T-cell (primary cell): ENCODE measurements at regions of chr7 and their contacts with region 1.

Region 1: GRCh38 chr7:6536262-6537260 is 14.7 kb downstream of the GRID2IP start:
- DNase-seq: peak in 1 of 35 experiments; percentile 11
- ATAC-seq: peak; percentile 34 to 68 (median 38)
- H3K4me3 ChIP-seq: no peak overlapping the region
- H3K4me3 Mint-ChIP-seq: no peak overlapping the region
- H3K27ac ChIP-seq: no peak overlapping the region
- H3K27ac Mint-ChIP-seq: no peak overlapping the region
- H3K4me1 ChIP-seq: peaks cover 0 to 7% of the 10 kb centered on the region in 2 experiments
- H3K4me1 Mint-ChIP-seq: peaks cover 2 to 6% (median 4%) of the 10 kb centered on the region in 3 donors
- H3K27me3 ChIP-seq: peaks cover 0 to 63% of the 10 kb centered on the region in 2 experiments
- H3K27me3 Mint-ChIP-seq: peaks cover 10 to 32% of the 10 kb centered on the region in 2 donors

Region 2: DNA sequence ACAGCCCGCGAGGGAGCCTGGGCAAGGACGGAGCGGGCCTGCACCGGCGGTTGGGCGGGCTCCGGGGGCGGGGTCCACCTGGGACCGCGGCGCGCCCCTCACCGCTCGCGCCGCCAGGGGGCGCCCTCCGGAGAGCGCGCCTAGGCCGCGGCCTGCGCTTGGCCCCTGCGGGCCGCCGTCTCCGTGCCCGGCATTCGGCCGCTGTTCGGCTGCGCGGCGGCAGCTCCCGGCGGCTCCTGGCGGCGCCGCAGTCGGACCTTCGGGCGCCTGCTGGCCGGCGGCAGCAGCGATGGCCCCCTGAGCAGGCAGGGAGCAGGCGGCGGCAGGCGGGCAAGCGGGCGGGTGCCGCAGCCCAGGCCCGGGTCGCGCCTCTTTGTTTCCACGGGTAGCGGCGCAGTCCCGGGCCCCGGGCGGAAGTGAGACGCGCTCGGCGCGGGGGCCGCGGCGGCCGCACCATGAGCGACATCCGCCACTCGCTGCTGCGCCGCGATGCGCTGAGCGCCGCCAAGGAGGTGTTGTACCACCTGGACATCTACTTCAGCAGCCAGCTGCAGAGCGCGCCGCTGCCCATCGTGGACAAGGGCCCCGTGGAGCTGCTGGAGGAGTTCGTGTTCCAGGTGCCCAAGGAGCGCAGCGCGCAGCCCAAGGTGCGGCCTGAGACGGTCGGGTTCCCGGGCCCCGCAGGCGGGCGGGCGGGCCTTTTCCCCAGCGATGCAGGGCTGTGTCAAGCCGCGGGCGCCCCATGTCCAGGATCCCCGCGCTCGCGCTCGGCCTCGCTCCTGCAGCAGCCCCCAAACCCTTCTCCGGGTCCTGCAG is 53.5 kb after region 1 on chr7 and contains the start of gene INTS15:
- CTCF ChIA-PET with region 1: interaction called in 1 of 2 experiments, 11 read pairs
- POLR2A ChIA-PET with region 1: no interaction called
- DNase-seq: peak; percentile 61 to 94 (median 78)
- ATAC-seq: peak; percentile 88 to 94 (median 90)
- H3K4me3 ChIP-seq: peak within 1 kb of the TSS; percentile 58 to 64
- H3K4me3 Mint-ChIP-seq: peak within 1 kb of the TSS; percentile 89 to 96 (median 91)
- H3K27ac ChIP-seq: peak within 1 kb of the TSS; percentile 56
- H3K27ac Mint-ChIP-seq: peak within 1 kb of the TSS; percentile 93 to 94
- H3K4me1 ChIP-seq: peaks cover 3 to 23% of the 10 kb centered on the region in 2 experiments
- H3K4me1 Mint-ChIP-seq: peaks cover 22 to 34% (median 26%) of the 10 kb centered on the region in 3 donors
- H3K27me3 ChIP-seq: no peaks in the 10 kb centered on the region
- H3K27me3 Mint-ChIP-seq: no peaks in the 10 kb centered on the region
- total RNA-seq, gene INTS15: 48.3 to 65.9 (median 64.1) TPM